Panc1 (cell line): ENCODE measurements at regions of chr2 and their contacts with region 1.

Region 1: DNA sequence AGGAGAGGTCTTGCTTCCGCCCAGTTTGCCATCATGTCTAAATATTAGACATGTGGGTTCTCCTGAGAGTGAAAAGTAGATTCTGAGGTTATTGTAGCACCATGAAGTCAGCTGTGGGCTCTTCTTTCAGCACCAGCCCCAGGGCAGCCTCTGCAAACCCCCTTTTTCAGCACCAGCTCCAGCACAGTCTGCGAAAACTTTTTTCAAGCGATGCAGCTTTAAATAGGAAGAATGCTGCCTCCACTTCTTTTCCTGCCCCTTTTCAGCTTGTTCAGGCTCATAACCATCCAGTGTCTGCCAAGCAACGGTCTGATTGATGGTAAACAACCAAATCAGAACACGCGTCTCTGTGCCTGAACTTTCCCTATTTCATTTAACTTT is at the start of gene COL5A2:
- DNase-seq: no peak
- ATAC-seq: peak; percentile 91
- H3K4me3 ChIP-seq: peak within 1 kb of the TSS; percentile 64 to 95
- H3K27ac ChIP-seq: peak within 1 kb of the TSS; percentile 84
- H3K4me1 ChIP-seq: peaks cover 18% of the 10 kb centered on the region
- H3K27me3 ChIP-seq: no peaks in the 10 kb centered on the region
- CTCF ChIP-seq: no peak
- total RNA-seq, gene COL5A2: 144 TPM

Region 2: GRCh38 chr2:188720811-188721605 is 458.6 kb before region 1 on chr2:
- CTCF ChIA-PET with region 1: no interaction called
- POLR2A ChIA-PET with region 1: no interaction called
- in situ Hi-C with region 1: no loop called
- intact Hi-C with region 1: no loop called
- DNase-seq: no peak
- ATAC-seq: no peak
- H3K4me3 ChIP-seq: no peak overlapping the region
- H3K27ac ChIP-seq: no peak overlapping the region
- H3K4me1 ChIP-seq: no peaks in the 10 kb centered on the region
- H3K27me3 ChIP-seq: no peaks in the 10 kb centered on the region
- CTCF ChIP-seq: no peak

Region 3: GRCh38 chr2:189137519-189137918 is 42.0 kb before region 1 on chr2:
- CTCF ChIA-PET with region 1: no interaction called
- POLR2A ChIA-PET with region 1: interaction called, 11 read pairs
- in situ Hi-C with region 1: no loop called
- intact Hi-C with region 1: no loop called
- DNase-seq: no peak
- ATAC-seq: no peak; the same call in 1 of the 2 replicates
- H3K4me3 ChIP-seq: no peak overlapping the region
- H3K27ac ChIP-seq: peak overlapping the region; percentile 45; the same call in 1 of the 2 replicates
- H3K4me1 ChIP-seq: peaks cover 22% of the 10 kb centered on the region; the same call in 1 of the 2 replicates
- H3K27me3 ChIP-seq: no peaks in the 10 kb centered on the region
- CTCF ChIP-seq: no peak